ENCODE measurements at regions of chr1 and their contacts with region 1.

Region 1: DNA sequence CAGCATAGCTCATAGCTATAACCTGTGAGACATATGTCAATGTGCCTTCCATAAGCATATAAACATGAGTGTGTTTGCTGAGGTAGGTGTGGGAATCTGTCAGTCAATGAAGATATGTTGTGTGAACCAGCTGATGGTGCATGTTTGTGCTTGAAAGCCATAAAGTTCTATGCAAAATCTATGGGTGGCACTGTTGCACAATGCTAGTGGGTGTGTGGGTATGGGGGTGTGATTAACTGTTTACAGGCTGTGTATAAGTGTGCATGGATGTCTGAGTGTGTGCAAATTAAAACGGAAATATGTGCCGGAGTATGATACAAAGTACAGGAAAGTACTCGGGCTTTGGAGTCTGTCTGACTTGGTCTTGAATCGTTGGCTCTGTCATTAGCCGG is 1.0 kb upstream of the ATP2B4 start:
- DNase-seq: peak; percentile 78
- H3K4me3 Mint-ChIP-seq: peak overlapping the region; percentile 90
- H3K27ac Mint-ChIP-seq: peak overlapping the region; percentile 97
- H3K4me1 Mint-ChIP-seq: peaks cover 52% of the 10 kb centered on the region
- H3K27me3 Mint-ChIP-seq: no peaks in the 10 kb centered on the region

Region 2: GRCh38 chr1:203290261-203291089 is 335.1 kb before region 1 on chr1:
- CTCF ChIA-PET with region 1: interaction called, 3 read pairs
- POLR2A ChIA-PET with region 1: interaction called, 4 read pairs
- intact Hi-C with region 1: loop called (anchors 1 kb)
- DNase-seq: peak; percentile 99
- H3K4me3 Mint-ChIP-seq: peak overlapping the region; percentile 82
- H3K27ac Mint-ChIP-seq: peak overlapping the region; percentile 100
- H3K4me1 Mint-ChIP-seq: peaks cover 76% of the 10 kb centered on the region
- H3K27me3 Mint-ChIP-seq: peaks cover 2% of the 10 kb centered on the region

Region 3: GRCh38 chr1:203512830-203513611 is 112.6 kb before region 1 on chr1:
- CTCF ChIA-PET with region 1: no interaction called
- POLR2A ChIA-PET with region 1: no interaction called
- intact Hi-C with region 1: loop called (anchors 2 kb)
- DNase-seq: peak; percentile 72
- H3K4me3 Mint-ChIP-seq: peak overlapping the region; percentile 8
- H3K27ac Mint-ChIP-seq: peak overlapping the region; percentile 72
- H3K4me1 Mint-ChIP-seq: peaks cover 24% of the 10 kb centered on the region
- H3K27me3 Mint-ChIP-seq: no peaks in the 10 kb centered on the region

Region 4: DNA sequence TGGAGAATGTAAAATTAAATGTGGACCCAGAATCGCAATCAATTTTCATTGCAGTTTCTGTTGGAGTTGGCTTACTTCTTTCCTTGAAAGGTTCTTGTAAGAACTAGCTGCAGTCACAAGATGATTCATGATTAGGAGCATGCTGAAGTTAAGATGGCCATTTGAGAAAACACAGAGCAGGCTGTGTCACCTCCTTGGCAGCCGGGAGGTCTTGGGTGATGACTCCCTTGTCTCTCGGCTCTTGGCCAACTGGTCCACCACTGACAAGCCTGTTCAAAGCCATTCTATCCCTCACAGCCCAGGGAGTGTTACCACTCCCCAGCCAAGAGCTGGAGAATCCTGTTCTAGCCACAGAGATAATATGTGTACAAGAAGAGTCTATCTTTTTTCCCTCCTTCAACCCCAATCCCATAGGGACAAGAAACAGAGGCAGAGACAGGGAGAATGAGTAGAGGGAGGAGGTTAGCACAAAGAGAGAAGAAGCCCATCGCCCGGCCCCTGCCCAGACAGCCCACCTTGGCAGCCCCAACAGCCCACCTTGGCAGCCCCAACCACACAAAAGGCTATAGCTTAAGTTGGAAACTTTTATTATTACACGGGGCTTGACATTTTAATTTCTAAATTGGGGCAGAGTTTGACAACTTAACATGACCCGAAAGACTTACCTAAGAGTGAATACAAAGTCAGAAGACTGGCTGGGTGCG is 90.9 kb before region 1 on chr1:
- CTCF ChIA-PET with region 1: no interaction called
- POLR2A ChIA-PET with region 1: no interaction called
- intact Hi-C with region 1: no loop called
- DNase-seq: no peak
- H3K4me3 Mint-ChIP-seq: no peak overlapping the region
- H3K27ac Mint-ChIP-seq: no peak overlapping the region
- H3K4me1 Mint-ChIP-seq: no peaks in the 10 kb centered on the region
- H3K27me3 Mint-ChIP-seq: no peaks in the 10 kb centered on the region

Region 5: GRCh38 chr1:203649999-203650855 is 24.6 kb after region 1 on chr1:
- CTCF ChIA-PET with region 1: interaction called, 31 read pairs
- POLR2A ChIA-PET with region 1: interaction called, 75 read pairs
- intact Hi-C with region 1: loop called (anchors 1 kb)
- DNase-seq: peak; percentile 81
- H3K4me3 Mint-ChIP-seq: peak overlapping the region; percentile 70
- H3K27ac Mint-ChIP-seq: peak overlapping the region; percentile 90
- H3K4me1 Mint-ChIP-seq: peaks cover 72% of the 10 kb centered on the region
- H3K27me3 Mint-ChIP-seq: no peaks in the 10 kb centered on the region

Region 6: GRCh38 chr1:203692565-203693470 is 67.2 kb after region 1 on chr1:
- CTCF ChIA-PET with region 1: interaction called, 13 read pairs
- POLR2A ChIA-PET with region 1: interaction called, 13 read pairs
- intact Hi-C with region 1: no loop called
- DNase-seq: peak; percentile 48
- H3K4me3 Mint-ChIP-seq: no peak overlapping the region
- H3K27ac Mint-ChIP-seq: peak overlapping the region; percentile 78
- H3K4me1 Mint-ChIP-seq: peaks cover 46% of the 10 kb centered on the region
- H3K27me3 Mint-ChIP-seq: no peaks in the 10 kb centered on the region

Region 7: DNA sequence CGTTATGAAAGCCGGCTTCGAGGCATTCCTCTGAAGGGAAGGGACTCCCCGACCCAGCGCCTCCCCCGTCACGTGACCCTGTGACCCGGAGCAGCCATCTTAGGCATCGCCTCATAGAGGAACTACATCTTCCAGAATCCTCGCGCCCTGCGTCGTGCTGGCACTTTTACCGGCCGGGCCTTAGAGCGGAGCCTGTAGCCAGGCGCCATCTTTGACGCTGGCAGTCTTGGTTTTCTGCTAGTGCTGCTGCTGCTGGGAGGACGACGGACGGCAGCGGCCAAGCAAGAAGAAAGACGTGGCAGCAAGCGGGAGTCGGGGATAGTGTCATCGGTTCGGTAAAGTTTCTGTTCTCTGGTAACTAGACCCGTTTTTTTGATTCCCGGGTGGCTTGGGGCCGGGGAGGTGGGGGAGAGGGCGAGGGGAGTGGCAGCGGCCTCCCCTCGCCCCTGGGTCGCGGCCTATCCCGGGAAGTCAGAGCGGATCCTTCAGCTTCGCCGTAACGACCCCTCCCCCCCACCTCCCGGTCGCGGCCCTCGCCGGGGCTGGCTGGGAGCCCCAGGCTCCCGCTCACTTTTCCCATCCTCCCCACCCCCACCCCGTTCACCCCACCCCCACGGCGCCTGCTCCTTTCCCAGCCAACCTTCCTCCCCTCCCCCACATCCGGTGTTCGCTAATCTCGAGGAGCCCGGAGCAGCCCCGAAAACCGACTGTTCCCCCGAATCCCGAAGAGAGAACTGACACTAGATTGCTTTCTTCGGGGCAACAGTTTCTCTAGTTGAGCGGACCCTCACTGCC is 170.0 kb after region 1 on chr1 and contains the starts of genes ZBED6 and ZC3H11A:
- CTCF ChIA-PET with region 1: interaction called, 3 read pairs
- POLR2A ChIA-PET with region 1: no interaction called
- intact Hi-C with region 1: loop called (anchors 10 kb)
- DNase-seq: peak; percentile 99
- H3K4me3 Mint-ChIP-seq: peak within 1 kb of the TSS; percentile 95
- H3K27ac Mint-ChIP-seq: peak within 1 kb of the TSS; percentile 96
- H3K4me1 Mint-ChIP-seq: peaks cover 46% of the 10 kb centered on the region
- H3K27me3 Mint-ChIP-seq: no peaks in the 10 kb centered on the region
- total RNA-seq, gene ZBED6: 18.6 to 20.4 TPM
- total RNA-seq, gene ZC3H11A: 90.2 to 91.8 TPM

Region 8: GRCh38 chr1:203898458-203899244 is 273.0 kb after region 1 on chr1:
- CTCF ChIA-PET with region 1: no interaction called
- POLR2A ChIA-PET with region 1: no interaction called
- intact Hi-C with region 1: no loop called
- DNase-seq: no peak
- H3K4me3 Mint-ChIP-seq: no peak overlapping the region
- H3K27ac Mint-ChIP-seq: no peak overlapping the region
- H3K4me1 Mint-ChIP-seq: no peaks in the 10 kb centered on the region
- H3K27me3 Mint-ChIP-seq: no peaks in the 10 kb centered on the region

Measured in activated CD4-positive, alpha-beta memory T cell treated with anti-CD3 and anti-CD28 coated beads for 36 hours (primary cell).